Motor neuron (in vitro differentiated cells): ENCODE measurements at regions of chr1 and their contacts with region 1.

Region 1: DNA sequence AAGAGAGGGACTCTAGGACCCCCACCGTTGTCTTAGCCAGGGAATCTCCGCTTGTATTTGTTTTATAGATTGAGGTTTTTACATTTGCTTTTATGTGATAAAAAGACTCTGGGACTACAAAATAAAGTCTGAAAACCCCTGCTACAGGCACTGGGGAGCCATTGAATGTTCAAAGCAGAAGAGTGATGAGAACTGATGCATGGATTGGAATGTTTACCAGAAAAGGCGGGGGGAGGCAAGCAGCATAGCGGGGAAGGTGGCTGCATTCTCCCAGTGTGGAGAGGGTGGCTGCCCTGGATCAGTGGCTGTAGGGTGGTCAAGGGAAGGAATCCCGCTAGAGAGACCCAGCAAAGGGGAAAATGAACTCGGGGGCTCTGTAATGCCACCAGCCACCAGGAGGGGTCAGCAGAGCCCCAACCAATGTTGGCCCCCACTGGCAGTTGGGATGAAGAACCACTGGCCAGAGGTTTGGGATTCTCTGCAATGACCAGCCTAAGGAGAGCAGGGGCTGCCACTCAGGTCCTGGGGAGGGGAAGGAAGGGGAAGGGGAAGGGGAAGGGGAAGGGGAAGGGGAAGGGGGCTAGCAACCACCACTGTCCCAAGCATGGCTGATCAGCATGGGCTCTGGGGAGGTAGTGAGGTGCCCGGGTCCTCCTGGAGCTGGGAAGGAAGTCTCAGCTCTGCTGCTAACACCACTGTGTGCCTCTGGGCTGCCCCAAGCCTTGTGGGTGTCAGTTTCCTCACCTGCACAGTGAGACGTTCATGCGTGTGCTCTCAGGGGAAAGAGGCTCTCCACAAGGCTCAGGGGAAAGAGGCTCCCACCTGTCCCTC is 19.2 kb upstream of the PEF1 start:
- ATAC-seq: peak in 7 of 8 experiments; percentile 19 to 51 (median 33)
- H3K4me3 ChIP-seq: no peak overlapping the region
- H3K27ac ChIP-seq: no peak overlapping the region
- H3K4me1 ChIP-seq: peaks cover 20 to 25% of the 10 kb centered on the region in 2 donors

Region 2: GRCh38 chr1:31762726-31763670 is 99.2 kb after region 1 on chr1:
- in situ Hi-C with region 1: loop called in 1 of 9 experiments (anchors 25 kb)
- ATAC-seq: peak in 7 of 8 experiments; percentile 6 to 58 (median 26)
- H3K4me3 ChIP-seq: peak overlapping the region; percentile 54 to 95 (median 74)
- H3K27ac ChIP-seq: no peak overlapping the region
- H3K4me1 ChIP-seq: peaks cover 71% of the 10 kb centered on the region in 2 donors

Region 3: DNA sequence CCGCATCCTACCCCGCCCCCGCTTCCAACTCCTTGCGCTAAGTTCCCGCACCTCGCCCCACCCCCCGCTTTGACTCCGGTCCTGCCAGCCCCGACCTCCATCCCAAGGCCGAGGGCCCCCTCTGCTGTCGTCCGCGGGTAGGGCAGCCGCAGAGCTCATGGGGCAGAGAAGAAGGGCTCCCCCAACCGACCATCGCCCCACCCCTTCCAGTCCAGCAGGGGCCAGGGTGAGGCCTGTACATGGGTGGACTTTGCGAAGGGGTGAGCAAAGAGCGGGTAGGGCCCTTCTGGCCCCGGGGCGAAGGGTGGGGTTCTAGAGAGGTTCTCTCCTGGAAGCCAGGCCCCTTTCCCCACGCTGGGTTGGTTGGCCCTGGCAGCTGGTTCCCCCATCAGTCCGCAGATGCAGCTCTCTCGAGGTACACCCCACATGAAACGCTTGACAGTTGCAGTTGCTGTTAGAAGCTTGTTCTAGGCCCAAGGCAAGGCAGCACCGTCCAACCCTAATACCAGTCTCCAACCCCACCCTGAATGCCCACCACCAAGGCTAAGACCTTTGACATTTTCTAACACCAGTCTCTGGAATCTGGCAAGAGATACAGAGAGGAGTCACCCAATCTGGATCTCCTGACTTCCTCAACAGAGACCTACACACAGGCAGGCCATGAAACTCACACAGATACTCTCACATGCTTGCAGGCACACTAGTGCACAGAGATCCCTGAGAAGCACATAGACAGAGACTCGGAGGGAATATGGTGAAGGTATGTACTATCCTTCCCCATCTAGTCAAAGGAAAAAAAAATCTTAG is 125.6 kb after region 1 on chr1:
- in situ Hi-C with region 1: loop called in 1 of 9 experiments (anchors 25 kb)
- ATAC-seq: peak; percentile 55 to 70 (median 66)
- H3K4me3 ChIP-seq: peak overlapping the region; percentile 34 to 73 (median 45)
- H3K27ac ChIP-seq: peak overlapping the region in 1 of 2 donors; percentile 84
- H3K4me1 ChIP-seq: peaks cover 18 to 22% of the 10 kb centered on the region in 2 donors

Region 4: DNA sequence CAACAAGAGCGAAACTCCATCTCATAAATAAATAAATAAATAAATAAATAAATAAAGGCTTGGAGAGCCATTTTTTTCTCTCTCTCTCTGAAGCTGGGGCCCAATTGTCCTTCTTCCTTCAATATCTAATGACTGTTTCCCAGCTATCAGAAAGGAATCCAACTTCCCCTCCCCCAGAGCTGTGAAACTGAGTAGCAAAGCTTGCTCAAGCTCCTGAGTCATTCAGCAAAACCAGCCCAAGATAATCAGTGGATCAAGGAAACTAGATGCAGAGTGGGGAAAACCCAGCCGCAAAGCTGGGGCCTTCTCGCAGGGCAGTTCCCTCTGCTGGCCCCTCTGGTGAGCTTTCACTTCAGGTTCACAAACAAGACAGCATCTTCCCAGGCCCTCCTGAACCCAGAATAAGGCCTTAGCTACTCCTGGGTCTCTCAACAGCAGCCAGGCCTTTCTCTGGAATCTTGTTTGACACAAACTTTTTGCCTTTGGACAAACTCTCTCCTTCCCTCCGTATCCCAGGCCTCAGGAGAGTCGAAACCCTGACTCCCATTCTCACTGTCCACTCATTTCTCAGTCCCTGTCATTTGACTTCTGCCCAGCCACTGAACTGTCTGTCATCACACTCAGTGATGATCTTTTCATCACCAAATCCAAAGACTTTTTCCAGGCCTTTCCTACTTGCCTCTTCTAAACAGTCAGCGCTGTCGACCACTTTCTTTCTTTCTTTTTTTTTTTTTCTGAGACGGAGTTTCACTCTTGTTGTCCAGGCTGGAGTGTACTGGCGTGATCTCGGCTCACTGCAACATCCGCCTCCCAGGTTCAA is 292.3 kb after region 1 on chr1:
- in situ Hi-C with region 1: loop called in 2 of 9 experiments (anchors 25 kb)
- ATAC-seq: peak; percentile 86 to 97 (median 87)
- H3K4me3 ChIP-seq: no peak overlapping the region
- H3K27ac ChIP-seq: peak overlapping the region; percentile 68 to 89
- H3K4me1 ChIP-seq: peaks cover 25 to 33% of the 10 kb centered on the region in 2 donors